ENCODE measurements at regions of chr12 and their contacts with region 1.

Region 1: GRCh38 chr12:51025836-51026638 is at the start of gene SLC11A2:
- DNase-seq: peak; percentile 89 to 92
- H3K4me3 ChIP-seq: peak within 1 kb of the TSS; percentile 77
- H3K27ac ChIP-seq: peak within 1 kb of the TSS; percentile 96
- H3K4me1 ChIP-seq: peaks cover 58% of the 10 kb centered on the region
- H3K27me3 ChIP-seq: no peaks in the 10 kb centered on the region
- CTCF ChIP-seq: no peak
- total RNA-seq, gene SLC11A2: 45.7 and 49.0 TPM in 2 replicates

Region 2: DNA sequence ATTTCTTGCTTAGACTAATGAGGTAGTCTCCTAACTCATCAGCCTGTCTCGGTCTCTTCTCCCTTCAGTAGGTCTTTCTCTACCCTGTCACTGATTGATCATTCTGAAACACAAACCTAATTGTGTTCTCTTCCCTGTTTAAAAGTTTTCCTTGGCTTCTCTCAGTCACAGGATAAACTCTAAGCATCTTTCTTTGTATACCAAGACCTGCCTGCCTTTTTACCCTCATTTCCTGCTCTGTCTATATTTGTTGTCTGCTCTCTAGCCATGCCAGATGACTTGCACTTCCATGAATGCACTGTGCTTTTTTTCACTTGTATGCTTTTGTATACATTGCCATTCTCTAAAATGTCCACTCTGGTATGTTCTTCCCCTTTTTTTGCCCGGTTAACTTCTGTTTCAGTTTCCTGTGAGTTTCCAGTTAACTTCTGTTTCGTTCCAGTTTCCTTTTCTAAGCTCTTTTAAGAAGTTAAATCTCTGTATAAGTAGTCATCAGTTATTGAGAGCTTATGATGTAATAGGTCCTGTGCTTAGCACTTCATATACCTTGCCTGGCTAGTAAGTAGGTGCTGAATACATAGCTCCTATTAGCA is 508.5 kb before region 1 on chr12:
- CTCF ChIA-PET with region 1: no interaction called
- POLR2A ChIA-PET with region 1: no interaction called
- intact Hi-C with region 1: no loop called
- DNase-seq: no peak
- H3K4me3 ChIP-seq: no peak overlapping the region
- H3K27ac ChIP-seq: peak overlapping the region; percentile 67
- H3K4me1 ChIP-seq: peaks cover 8% of the 10 kb centered on the region; the same call in 1 of the 2 replicates
- H3K27me3 ChIP-seq: no peaks in the 10 kb centered on the region
- CTCF ChIP-seq: no peak

Region 3: DNA sequence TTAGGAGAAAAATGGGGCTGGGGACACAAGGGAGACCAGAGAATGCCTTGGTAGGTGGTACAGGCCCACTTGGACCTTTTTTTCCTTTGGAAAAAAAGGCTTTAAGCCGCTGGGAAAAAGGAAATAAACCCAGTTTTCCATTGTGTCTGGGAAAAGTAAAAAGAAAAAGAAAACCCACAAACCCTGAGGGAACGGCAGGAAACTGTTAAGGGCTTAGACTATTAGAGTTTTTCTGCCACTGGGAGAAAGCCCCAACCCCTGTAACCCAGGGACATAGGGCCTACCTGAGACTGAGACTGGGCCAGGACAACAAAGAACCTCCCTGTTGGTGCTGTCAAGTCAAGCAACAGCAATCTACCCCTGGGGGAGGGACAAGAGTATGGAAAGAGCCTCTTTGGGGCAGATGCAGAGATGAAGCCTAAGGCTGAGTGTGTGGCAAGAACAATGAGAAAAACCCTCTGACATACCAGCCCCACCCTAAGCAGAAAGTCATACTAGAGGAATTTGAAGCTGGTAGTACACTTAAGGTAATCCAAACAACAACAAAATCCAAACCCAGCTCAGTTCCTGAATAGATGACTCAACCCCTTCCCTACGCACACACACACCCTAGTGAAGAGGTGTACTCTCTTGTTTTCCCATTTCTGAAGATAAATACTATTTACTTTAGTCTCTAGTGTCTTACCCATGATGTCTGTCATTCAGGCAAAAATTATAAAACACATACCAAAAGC is 239.4 kb before region 1 on chr12:
- CTCF ChIA-PET with region 1: interaction called, 4 read pairs
- POLR2A ChIA-PET with region 1: no interaction called
- intact Hi-C with region 1: loop called (anchors 1 kb)
- DNase-seq: peak; percentile 73 to 99
- H3K4me3 ChIP-seq: no peak overlapping the region
- H3K27ac ChIP-seq: peak overlapping the region; percentile 90
- H3K4me1 ChIP-seq: peaks cover 40% of the 10 kb centered on the region
- H3K27me3 ChIP-seq: no peaks in the 10 kb centered on the region
- CTCF ChIP-seq: no peak

Region 4: DNA sequence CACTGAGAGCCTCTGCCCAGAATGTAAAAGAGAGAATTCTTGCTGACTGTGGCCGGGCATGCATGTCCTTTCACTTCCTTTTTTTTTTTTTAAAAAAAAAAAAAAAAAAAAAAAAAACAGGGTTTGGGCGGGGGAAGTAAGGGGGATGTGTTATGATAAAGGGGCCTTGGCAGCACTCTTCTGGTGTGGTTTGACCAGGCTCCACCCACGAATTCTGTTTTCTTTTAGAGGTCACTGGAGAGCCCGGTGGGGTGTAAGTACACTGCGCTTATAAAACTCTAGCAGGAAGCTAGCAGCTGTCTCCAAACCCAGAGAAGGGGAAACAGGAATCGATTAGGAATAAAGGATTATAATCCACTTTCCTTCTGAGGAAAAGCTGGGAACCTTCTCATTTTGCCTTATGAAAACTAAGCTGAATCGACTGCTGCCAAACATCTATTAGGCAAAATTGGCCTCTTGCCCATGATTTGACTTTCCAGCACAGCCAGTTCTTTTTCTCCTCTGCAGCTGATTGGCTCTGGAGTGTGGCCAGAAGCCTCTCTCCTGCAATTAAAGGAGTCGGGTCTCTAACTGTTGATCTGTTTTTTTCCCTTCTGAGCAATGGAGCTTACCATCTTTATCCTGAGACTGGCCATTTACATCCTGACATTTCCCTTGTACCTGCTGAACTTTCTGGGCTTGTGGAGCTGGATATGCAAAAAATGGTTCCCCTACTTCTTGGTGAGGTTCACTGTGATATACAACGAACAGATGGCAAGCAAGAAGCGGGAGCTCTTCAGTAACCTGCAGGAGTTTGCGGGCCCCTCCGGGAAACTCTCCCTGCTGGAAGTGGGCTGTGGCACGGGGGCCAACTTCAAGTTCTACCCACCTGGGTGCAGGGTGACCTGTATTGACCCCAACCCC is 101.3 kb before region 1 on chr12:
- CTCF ChIA-PET with region 1: no interaction called
- POLR2A ChIA-PET with region 1: no interaction called
- intact Hi-C with region 1: loop called (anchors 10 kb)
- DNase-seq: peak; percentile 44 to 72
- H3K4me3 ChIP-seq: peak overlapping the region; percentile 47; the same call in 1 of the 2 replicates
- H3K27ac ChIP-seq: no peak overlapping the region
- H3K4me1 ChIP-seq: peaks cover 19% of the 10 kb centered on the region
- H3K27me3 ChIP-seq: no peaks in the 10 kb centered on the region
- CTCF ChIP-seq: no peak

Region 5: DNA sequence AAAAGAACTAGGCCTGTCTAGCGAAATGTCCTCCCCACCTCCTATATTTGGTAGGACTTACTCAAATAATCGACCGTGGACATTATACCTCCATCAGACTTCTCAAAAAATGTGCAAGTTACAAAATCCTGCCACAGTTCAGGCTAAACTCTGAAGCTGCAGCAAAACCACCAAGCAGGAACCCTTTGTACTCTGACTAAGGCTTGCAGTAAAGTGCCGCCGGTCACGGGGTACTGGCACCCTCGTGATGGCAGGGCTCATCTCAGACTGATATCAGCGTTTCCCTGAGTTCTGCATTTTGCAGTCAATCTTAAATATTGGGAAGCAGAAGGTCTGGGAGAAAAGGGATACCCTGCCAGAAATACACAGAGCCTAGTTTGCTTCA is 17.0 kb before region 1 on chr12:
- CTCF ChIA-PET with region 1: interaction called, 4 read pairs
- POLR2A ChIA-PET with region 1: no interaction called
- intact Hi-C with region 1: loop called (anchors 1 kb)
- DNase-seq: no peak
- H3K4me3 ChIP-seq: no peak overlapping the region
- H3K27ac ChIP-seq: peak overlapping the region; percentile 9; the same call in 1 of the 2 replicates
- H3K4me1 ChIP-seq: peaks cover 22% of the 10 kb centered on the region
- H3K27me3 ChIP-seq: no peaks in the 10 kb centered on the region
- CTCF ChIP-seq: no peak

Region 6: DNA sequence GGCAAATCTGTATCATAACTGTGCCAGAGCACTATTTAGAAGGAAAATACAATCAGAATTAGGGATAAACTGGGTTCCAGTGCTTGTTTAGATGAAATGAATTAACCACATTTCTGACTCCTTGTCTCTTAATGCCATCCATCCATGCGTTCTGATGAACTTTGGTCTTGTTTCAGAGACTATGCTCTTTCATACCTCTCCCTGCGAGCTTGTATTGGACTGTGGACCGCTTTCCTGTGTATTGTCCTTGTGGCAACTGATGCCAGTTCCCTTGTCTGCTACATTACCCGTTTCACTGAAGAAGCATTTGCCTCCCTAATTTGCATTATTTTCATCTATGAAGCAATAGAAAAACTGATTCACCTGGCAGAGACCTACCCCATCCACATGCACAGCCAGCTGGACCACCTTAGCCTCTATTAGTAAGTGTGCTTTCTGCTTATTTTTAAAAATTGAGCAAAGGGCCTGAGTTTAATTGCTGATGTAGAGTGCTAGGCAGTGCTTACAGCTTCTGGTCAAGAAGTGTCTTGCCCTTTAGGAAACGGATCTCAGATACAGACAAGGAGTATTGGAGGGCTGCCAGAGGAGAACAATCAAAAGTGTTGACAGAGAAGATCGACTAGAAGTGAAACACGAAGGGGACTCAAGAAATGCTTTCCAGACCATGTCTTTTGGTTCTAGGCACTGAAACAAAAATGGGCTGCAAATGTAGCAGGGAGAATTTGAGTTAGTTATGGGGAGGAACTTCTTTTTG is 445.3 kb after region 1 on chr12:
- CTCF ChIA-PET with region 1: no interaction called
- POLR2A ChIA-PET with region 1: no interaction called
- intact Hi-C with region 1: no loop called
- DNase-seq: no peak
- H3K4me3 ChIP-seq: no peak overlapping the region
- H3K27ac ChIP-seq: no peak overlapping the region
- H3K4me1 ChIP-seq: no peaks in the 10 kb centered on the region
- H3K27me3 ChIP-seq: no peaks in the 10 kb centered on the region
- CTCF ChIP-seq: no peak

Region 7: DNA sequence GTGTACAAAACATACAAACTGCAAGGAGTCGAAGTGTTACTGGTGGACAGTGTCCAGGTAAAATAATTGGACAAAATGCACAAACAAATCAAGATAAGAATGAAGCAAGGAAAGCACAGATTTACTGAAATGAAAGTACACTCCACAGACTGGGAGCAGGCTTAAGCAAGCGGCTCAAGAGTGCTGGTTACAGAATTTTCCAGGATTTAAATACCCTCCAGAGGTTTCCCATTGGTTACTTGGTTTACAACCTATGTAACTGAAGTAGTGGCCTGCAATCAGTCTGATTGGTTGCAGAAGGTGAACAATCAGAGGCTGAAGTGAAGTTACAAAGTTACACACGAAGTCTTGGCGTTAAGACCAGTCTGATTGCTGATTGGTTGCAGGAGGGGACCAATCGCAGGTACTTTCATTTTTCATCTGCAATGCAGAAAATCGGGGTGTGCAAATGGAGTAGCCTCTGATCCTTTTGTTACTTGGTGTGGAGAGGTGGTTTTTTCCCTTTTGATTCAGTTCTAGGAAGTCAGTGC is 553.3 kb after region 1 on chr12:
- CTCF ChIA-PET with region 1: no interaction called
- POLR2A ChIA-PET with region 1: no interaction called
- intact Hi-C with region 1: no loop called
- DNase-seq: no peak
- H3K4me3 ChIP-seq: no peak overlapping the region
- H3K27ac ChIP-seq: no peak overlapping the region
- H3K4me1 ChIP-seq: no peaks in the 10 kb centered on the region
- H3K27me3 ChIP-seq: peaks cover 70% of the 10 kb centered on the region
- CTCF ChIP-seq: no peak